ENCODE measurements at regions of chr2 and their contacts with region 1.

Region 1: DNA sequence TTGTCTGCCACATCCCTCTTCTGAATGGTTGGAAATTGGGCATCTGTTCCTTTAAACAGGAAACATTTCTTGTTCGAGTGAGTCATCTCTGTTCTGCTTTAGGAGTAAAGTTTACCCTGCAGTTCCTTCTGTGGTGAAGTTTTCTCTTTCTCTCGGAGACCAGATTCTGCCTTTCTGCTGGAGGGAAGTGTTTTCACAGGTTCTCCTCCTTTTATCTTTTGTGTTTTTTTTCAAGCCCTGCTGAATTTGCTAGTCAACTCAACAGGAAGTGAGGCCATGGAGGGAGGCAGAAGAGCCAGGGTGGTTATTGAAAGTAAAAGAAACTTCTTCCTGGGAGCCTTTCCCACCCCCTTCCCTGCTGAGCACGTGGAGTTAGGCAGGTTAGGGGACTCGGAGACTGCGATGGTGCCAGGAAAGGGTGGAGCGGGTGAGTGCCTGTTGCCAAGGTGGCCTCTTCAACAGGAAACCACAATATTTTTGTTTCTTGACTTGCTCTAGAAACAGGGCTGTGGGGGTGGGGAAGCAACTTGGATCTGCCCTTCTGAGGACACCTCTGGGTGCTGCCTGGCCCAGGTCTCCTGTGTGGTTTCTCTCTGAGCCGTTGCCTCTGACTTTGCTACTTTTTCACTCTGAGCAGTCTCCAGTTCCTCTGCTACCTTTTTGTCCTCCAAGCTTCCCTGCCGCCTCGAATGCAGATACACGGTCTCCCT is 2.2 kb upstream of the CASP8 start:
- DNase-seq: peak; percentile 79
- ATAC-seq: peak; percentile 76
- H3K4me3 ChIP-seq: peak overlapping the region; percentile 67
- H3K27ac ChIP-seq: peak overlapping the region; percentile 88
- H3K4me1 ChIP-seq: peaks cover 12% of the 10 kb centered on the region
- H3K27me3 ChIP-seq: no peaks in the 10 kb centered on the region
- CTCF ChIP-seq: no peak; the same call in 1 of the 2 replicates
- POLR2A ChIP-seq: no peak; the same call in 1 of the 2 replicates
- RAD21 ChIP-seq: peak; percentile 16; the same call in 1 of the 2 replicates

Region 2: GRCh38 chr2:201353116-201353515 is 95.0 kb after region 1 on chr2:
- CTCF ChIA-PET with region 1: no interaction called
- POLR2A ChIA-PET with region 1: no interaction called
- dilution Hi-C with region 1: no loop called
- in situ Hi-C with region 1: no loop called
- intact Hi-C with region 1: loop called (anchors 5 kb)
- DNase-seq: peak; percentile 71
- ATAC-seq: peak; percentile 81
- H3K4me3 ChIP-seq: no peak overlapping the region
- H3K27ac ChIP-seq: no peak overlapping the region
- H3K4me1 ChIP-seq: peaks cover 8% of the 10 kb centered on the region
- H3K27me3 ChIP-seq: no peaks in the 10 kb centered on the region
- CTCF ChIP-seq: no peak
- POLR2A ChIP-seq: no peak
- RAD21 ChIP-seq: no peak

Region 3: GRCh38 chr2:201654616-201655384 is 396.7 kb after region 1 on chr2:
- CTCF ChIA-PET with region 1: no interaction called
- POLR2A ChIA-PET with region 1: no interaction called
- dilution Hi-C with region 1: no loop called
- in situ Hi-C with region 1: no loop called
- intact Hi-C with region 1: no loop called
- DNase-seq: peak; percentile 91
- ATAC-seq: peak; percentile 65
- H3K4me3 ChIP-seq: no peak overlapping the region; the same call in 1 of the 2 replicates
- H3K27ac ChIP-seq: peak overlapping the region; percentile 93
- H3K4me1 ChIP-seq: peaks cover 17% of the 10 kb centered on the region
- H3K27me3 ChIP-seq: no peaks in the 10 kb centered on the region
- CTCF ChIP-seq: no peak
- POLR2A ChIP-seq: no peak
- RAD21 ChIP-seq: no peak

Measured in IMR-90 (cell line).